Dendritic cell treated with granulocyte-macrophage colony-stimulating factor and Interleukin-4, amounts not matched to agents 40 ng/mL and 50 ng/mL, for 4 days (primary cell): ENCODE measurements at regions of chr5 and their contacts with region 1.

Region 1: DNA sequence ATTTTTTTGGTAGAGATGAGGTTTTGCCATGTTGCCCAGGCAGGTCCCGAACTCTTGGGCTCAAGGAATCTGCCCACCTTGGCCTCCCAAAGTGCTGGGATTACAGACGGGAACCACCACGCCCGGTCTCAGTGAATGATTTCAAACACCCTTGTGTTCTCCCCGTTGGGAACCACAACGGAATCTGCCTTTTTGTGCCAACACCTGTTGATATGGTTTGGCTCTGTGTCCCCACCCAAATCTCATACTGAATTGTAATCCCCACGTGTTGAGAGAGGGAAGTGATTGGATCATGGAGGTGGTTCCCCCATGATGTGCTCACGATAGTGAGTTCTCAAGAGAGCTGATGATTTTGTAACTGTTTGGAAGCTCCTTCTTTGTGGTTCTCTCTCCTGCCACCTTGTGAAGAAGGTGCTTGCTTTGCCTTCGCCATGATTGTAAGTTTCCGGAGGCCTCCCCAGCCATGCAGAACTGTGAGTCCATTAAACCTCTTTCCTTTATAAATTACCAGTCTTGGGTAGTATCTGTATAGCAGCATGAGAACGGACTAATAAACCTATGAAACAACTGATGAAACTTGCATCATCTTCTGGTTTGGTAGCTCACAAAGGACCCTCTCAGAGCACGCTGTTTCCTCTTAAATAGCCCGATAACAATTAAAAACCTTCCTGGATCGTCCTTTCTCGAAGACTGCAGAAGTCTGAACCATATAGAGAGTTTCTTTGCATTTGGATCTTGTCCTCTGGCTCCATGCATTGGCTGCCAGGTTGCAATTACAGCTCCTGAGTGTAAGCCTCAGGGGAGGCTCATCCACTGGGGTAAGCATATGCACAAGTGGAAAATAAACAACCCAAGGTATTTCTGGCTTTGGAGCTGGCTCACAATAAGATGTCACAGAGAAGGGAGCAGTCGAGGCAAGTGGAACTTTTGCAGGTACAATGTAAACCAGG is 91.5 kb downstream of the SPRY4 start:
- H3K4me3 Mint-ChIP-seq: no peak overlapping the region
- H3K27ac Mint-ChIP-seq: no peak overlapping the region
- H3K4me1 Mint-ChIP-seq: peaks cover 11% of the 10 kb centered on the region
- H3K27me3 Mint-ChIP-seq: peaks cover 71% of the 10 kb centered on the region

Region 2: GRCh38 chr5:142095651-142096330 is 137.6 kb before region 1 on chr5:
- intact Hi-C with region 1: loop called (anchors 5 kb)
- H3K4me3 Mint-ChIP-seq: no peak overlapping the region
- H3K27ac Mint-ChIP-seq: peak overlapping the region; percentile 52
- H3K4me1 Mint-ChIP-seq: peaks cover 14% of the 10 kb centered on the region
- H3K27me3 Mint-ChIP-seq: peaks cover 4% of the 10 kb centered on the region

Region 3: GRCh38 chr5:142253938-142254337 is 20.6 kb after region 1 on chr5:
- intact Hi-C with region 1: no loop called
- H3K4me3 Mint-ChIP-seq: no peak overlapping the region
- H3K27ac Mint-ChIP-seq: no peak overlapping the region
- H3K4me1 Mint-ChIP-seq: no peaks in the 10 kb centered on the region
- H3K27me3 Mint-ChIP-seq: peaks cover 21% of the 10 kb centered on the region